ENCODE measurements at regions of chr17 and their contacts with region 1.

Region 1: DNA sequence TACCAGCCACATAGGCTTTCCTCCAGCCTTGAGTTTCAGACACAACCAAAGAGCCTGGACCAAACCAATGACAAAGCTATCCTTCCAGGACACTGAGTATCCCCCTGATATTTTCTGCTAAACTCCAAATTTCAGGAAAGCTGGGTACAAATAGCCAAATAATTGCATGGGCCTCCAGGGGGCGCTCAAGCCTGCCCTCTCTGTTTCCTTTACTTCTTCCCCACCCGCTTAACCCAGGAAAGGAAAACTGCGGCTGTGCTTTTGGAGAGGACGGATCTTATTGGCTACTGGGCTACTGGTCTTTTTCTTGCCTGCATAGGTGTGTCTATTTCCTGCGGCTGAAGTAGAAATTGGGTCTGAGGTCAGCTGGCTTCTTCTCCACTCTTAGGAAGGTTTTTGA is 30.1 kb downstream of the GNGT2 start:
- DNase-seq: peak; percentile 71
- ATAC-seq: peak; percentile 61
- H3K4me3 Mint-ChIP-seq: no peak overlapping the region
- H3K27ac Mint-ChIP-seq: no peak overlapping the region
- H3K4me1 Mint-ChIP-seq: peaks cover 15% of the 10 kb centered on the region
- H3K27me3 Mint-ChIP-seq: peaks cover 9% of the 10 kb centered on the region

Region 2: GRCh38 chr17:48985436-48986245 is 194.7 kb before region 1 on chr17:
- CTCF ChIA-PET with region 1: no interaction called
- POLR2A ChIA-PET with region 1: no interaction called
- DNase-seq: no peak
- ATAC-seq: no peak
- H3K4me3 Mint-ChIP-seq: no peak overlapping the region
- H3K27ac Mint-ChIP-seq: no peak overlapping the region
- H3K4me1 Mint-ChIP-seq: no peaks in the 10 kb centered on the region
- H3K27me3 Mint-ChIP-seq: peaks cover 22% of the 10 kb centered on the region

Region 3: GRCh38 chr17:49191917-49192741 is 11.8 kb after region 1 on chr17:
- CTCF ChIA-PET with region 1: interaction called, 53 read pairs
- POLR2A ChIA-PET with region 1: interaction called, 3 read pairs
- DNase-seq: peak; percentile 92
- ATAC-seq: peak; percentile 62
- H3K4me3 Mint-ChIP-seq: peak overlapping the region; percentile 83
- H3K27ac Mint-ChIP-seq: peak overlapping the region; percentile 94
- H3K4me1 Mint-ChIP-seq: peaks cover 55% of the 10 kb centered on the region
- H3K27me3 Mint-ChIP-seq: no peaks in the 10 kb centered on the region

Region 4: DNA sequence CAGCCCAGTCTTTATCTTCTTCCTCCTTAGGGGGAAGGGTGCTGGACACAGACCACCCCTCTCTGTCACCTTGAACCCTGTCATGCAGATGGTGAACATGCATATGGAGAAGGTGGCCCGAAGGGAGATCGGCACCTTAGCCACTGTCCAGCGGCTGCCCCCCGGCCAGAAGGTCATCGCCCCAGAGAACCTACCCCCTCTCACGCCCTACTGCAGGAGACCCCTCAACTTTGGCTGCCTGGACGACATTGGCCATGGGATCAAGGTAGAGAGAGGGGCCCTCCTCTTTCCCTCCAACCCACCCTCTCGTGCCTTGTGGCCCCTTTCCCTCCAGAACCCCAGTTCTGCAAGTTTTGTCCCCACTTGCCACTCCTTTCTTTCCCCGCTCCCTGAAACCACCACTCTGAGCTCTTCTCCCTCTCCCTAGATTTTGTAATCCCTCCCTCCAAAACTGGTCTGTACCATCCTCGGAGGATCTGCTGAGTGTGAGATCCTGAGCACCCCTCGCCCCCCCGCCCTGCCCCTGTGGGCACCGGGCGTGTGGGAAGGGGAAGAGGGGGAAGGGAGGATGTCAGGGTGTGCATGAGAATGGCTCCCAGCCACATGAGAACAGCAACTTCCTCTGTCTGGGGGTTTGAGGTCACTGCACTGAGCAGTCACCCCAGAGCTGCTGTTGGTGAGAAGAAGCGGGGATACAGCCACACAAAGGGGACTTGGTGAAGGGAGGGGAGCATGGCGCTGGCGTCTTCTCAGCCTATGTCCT is 37.5 kb after region 1 on chr17:
- CTCF ChIA-PET with region 1: interaction called, 21 read pairs
- POLR2A ChIA-PET with region 1: interaction called, 4 read pairs
- DNase-seq: peak; percentile 90
- ATAC-seq: peak; percentile 77
- H3K4me3 Mint-ChIP-seq: peak overlapping the region; percentile 77
- H3K27ac Mint-ChIP-seq: peak overlapping the region; percentile 98
- H3K4me1 Mint-ChIP-seq: peaks cover 82% of the 10 kb centered on the region
- H3K27me3 Mint-ChIP-seq: no peaks in the 10 kb centered on the region

Region 5: GRCh38 chr17:49230636-49231562 is 50.6 kb after region 1 on chr17 and contains the start of gene PHOSPHO1:
- CTCF ChIA-PET with region 1: interaction called, 91 read pairs
- POLR2A ChIA-PET with region 1: interaction called, 5 read pairs
- DNase-seq: peak; percentile 91
- ATAC-seq: peak; percentile 88
- H3K4me3 Mint-ChIP-seq: peak within 1 kb of the TSS; percentile 79
- H3K27ac Mint-ChIP-seq: peak within 1 kb of the TSS; percentile 75
- H3K4me1 Mint-ChIP-seq: peaks cover 40% of the 10 kb centered on the region
- H3K27me3 Mint-ChIP-seq: peaks cover 19% of the 10 kb centered on the region
- total RNA-seq, gene PHOSPHO1: not detected

Region 6: GRCh38 chr17:49390548-49391324 is 210.4 kb after region 1 on chr17:
- CTCF ChIA-PET with region 1: interaction called, 10 read pairs
- POLR2A ChIA-PET with region 1: no interaction called
- DNase-seq: no peak
- ATAC-seq: no peak
- H3K4me3 Mint-ChIP-seq: peak overlapping the region; percentile 37
- H3K27ac Mint-ChIP-seq: peak overlapping the region; percentile 94
- H3K4me1 Mint-ChIP-seq: peaks cover 71% of the 10 kb centered on the region
- H3K27me3 Mint-ChIP-seq: no peaks in the 10 kb centered on the region